ENCODE measurements at regions of chr2 and their contacts with region 1.

Region 1: GRCh38 chr2:148634749-148635148 is 9.8 kb upstream of the EPC2 start:
- H3K4me3 Mint-ChIP-seq: no peak overlapping the region
- H3K27ac Mint-ChIP-seq: no peak overlapping the region
- H3K4me1 Mint-ChIP-seq: no peaks in the 10 kb centered on the region
- H3K27me3 Mint-ChIP-seq: no peaks in the 10 kb centered on the region

Region 2: GRCh38 chr2:148096012-148096411 is 538.7 kb before region 1 on chr2:
- intact Hi-C with region 1: no loop called
- H3K4me3 Mint-ChIP-seq: no peak overlapping the region
- H3K27ac Mint-ChIP-seq: no peak overlapping the region
- H3K4me1 Mint-ChIP-seq: no peaks in the 10 kb centered on the region
- H3K27me3 Mint-ChIP-seq: no peaks in the 10 kb centered on the region

Region 3: GRCh38 chr2:148674063-148675020 is 39.6 kb after region 1 on chr2:
- intact Hi-C with region 1: loop called (anchors 5 kb)
- H3K4me3 Mint-ChIP-seq: no peak overlapping the region
- H3K27ac Mint-ChIP-seq: no peak overlapping the region
- H3K4me1 Mint-ChIP-seq: peaks cover 66% of the 10 kb centered on the region
- H3K27me3 Mint-ChIP-seq: no peaks in the 10 kb centered on the region

Measured in dendritic cell treated with granulocyte-macrophage colony-stimulating factor and Interleukin-4, amounts not matched to agents 40 ng/mL and 50 ng/mL, for 4 days (primary cell).